ENCODE measurements at regions of chr10 and their contacts with region 1.

Region 1: DNA sequence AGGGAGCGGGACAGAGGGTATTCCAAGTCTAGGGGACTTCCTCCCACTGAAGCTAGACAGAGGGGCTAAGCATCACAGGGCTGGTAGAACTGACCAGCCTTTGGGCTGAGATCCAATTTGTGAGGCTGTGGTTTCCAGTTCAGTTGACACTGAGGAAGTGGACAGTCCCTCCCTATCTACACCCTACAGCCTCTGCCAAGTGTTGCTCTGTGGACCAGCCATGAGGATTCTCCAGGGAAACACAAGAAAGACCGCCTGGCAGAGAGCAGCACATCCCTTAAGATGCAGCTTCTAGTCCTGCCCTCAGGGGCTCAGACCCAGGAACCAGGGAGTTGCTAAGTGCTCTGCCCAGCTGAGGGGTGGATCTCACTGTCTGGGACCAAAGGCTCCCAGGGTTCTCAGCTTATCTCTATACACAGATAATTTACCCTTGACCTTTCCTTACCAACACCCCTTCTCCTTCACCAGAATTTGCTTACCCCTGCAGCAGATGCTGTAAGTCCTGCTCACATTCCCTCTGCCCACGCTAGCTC is 252.0 kb downstream of the SKIDA1 start:
- DNase-seq: no peak
- ATAC-seq: no peak
- H3K4me3 ChIP-seq: no peak overlapping the region
- H3K27ac ChIP-seq: no peak overlapping the region
- H3K4me1 ChIP-seq: peaks cover 9 to 26% of the 10 kb centered on the region in 2 experiments; a peak in 3 of 4 replicates
- H3K27me3 ChIP-seq: no peaks in the 10 kb centered on the region
- CTCF ChIP-seq: no peak
- POLR2A ChIP-seq: no peak
- RAD21 ChIP-seq: no peak

Region 2: GRCh38 chr10:21078410-21079329 is 194.8 kb before region 1 on chr10:
- CTCF ChIA-PET with region 1: interaction called, 8 read pairs
- POLR2A ChIA-PET with region 1: interaction called, 3 read pairs
- RAD21 ChIA-PET with region 1: interaction called in 1 of 2 experiments, 4 read pairs
- intact Hi-C with region 1: loop called (anchors 1 kb)
- DNase-seq: peak; percentile 58
- ATAC-seq: peak; percentile 98
- H3K4me3 ChIP-seq: no peak overlapping the region
- H3K27ac ChIP-seq: no peak overlapping the region
- H3K4me1 ChIP-seq: peaks cover 0 to 6% of the 10 kb centered on the region in 2 experiments; a peak in 2 of 4 replicates
- H3K27me3 ChIP-seq: no peaks in the 10 kb centered on the region
- CTCF ChIP-seq: peak; percentile 64 to 84 (median 79)
- POLR2A ChIP-seq: no peak
- RAD21 ChIP-seq: peak; percentile 87

Region 3: DNA sequence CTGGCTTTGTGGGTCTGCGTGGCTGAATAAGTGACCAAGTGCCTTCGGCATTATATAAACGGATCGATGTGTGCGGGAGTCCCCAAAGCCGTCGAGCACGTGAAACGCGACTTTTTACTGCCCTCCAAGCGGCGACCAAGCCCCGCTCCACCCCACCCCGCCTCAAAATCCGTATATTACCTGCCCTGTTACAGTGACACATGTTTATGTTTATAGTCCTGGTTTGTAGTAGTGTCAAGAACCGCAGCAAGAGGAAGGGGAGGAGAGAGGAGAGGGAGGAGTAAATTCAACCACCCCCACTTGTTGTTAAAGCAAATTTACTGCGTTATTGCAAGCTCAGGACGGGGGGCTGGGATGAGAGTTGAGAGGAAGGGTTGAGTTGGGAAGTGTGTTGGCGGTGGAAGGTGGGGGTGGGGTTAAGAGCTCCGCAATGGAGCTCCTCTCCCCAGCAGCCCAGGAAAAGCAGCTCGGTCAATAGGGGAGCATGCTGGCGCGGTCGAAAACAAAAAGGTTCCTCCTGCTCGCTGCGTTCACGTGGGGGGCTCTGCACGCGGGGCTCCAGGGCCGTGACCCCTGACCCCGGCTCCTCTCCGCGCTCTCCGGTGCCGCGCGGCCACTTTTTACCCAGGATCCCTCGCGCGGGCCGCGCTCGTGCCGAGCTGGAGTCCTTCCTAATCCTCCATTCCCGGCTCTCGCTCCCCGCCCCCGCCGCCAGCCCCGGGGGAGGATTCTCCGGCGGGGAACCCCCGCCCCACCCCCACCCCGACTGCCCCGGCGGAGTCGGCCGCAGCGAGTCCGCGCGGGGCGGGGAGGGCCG is 252.1 kb after region 1 on chr10 and contains the start of gene SKIDA1:
- CTCF ChIA-PET with region 1: no interaction called
- POLR2A ChIA-PET with region 1: no interaction called
- RAD21 ChIA-PET with region 1: no interaction called
- intact Hi-C with region 1: loop called (anchors 1 kb)
- DNase-seq: no peak
- ATAC-seq: peak; percentile 69
- H3K4me3 ChIP-seq: peak within 1 kb of the TSS; percentile 52 to 56
- H3K27ac ChIP-seq: peak within 1 kb of the TSS; percentile 91
- H3K4me1 ChIP-seq: peaks cover 9 to 57% of the 10 kb centered on the region in 2 experiments
- H3K27me3 ChIP-seq: no peaks in the 10 kb centered on the region
- CTCF ChIP-seq: no peak
- POLR2A ChIP-seq: no peak
- RAD21 ChIP-seq: no peak
- total RNA-seq, gene SKIDA1: 0.34 TPM

Region 4: GRCh38 chr10:21599582-21599981 is 326.1 kb after region 1 on chr10:
- CTCF ChIA-PET with region 1: no interaction called
- POLR2A ChIA-PET with region 1: no interaction called
- RAD21 ChIA-PET with region 1: no interaction called
- intact Hi-C with region 1: no loop called
- DNase-seq: no peak
- ATAC-seq: no peak
- H3K4me3 ChIP-seq: no peak overlapping the region
- H3K27ac ChIP-seq: no peak overlapping the region
- H3K4me1 ChIP-seq: no peaks in the 10 kb centered on the region; a peak in 1 of 4 replicates
- H3K27me3 ChIP-seq: no peaks in the 10 kb centered on the region
- CTCF ChIP-seq: no peak
- POLR2A ChIP-seq: no peak
- RAD21 ChIP-seq: peak; percentile 12; the same call in 1 of the 2 replicates

Measured in HCT116 (cell line).